ENCODE measurements at regions of chr15 and their contacts with region 1.

Region 1: DNA sequence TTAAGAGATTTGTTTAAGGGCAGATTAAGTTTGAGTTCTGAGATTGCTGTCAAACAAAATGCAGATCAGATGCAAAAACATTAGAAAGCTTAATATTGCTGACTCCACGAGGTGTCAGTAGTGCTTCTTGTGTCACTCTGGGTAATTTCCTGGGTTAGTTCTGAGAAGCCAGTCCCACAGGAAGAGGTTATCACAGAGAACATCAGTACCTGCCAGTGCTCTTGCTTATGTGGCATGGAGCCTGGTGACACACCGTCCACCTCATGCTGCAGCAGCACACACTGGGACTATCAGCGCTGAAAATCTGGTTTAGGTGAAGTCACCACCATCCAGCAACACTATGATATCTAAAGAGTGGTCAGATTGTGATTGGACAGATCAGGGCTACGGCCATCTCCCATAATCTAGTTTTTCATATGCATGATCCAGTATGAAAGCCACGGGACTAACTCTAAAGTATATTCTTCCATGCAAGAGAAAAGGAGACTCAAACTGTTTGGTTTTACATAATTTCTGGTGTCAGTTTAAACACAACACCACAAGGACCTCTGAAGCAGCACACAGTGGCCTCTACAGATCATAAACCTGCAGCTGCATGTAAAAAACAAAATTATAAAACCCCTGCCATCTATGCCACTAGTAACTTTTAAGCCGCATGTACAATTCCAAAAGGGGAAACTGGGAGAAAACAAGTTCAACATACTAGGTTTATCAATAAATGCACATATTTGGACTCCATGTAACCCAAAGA is 36.1 kb upstream of the MYO5C start:
- DNase-seq: peak; percentile 76
- H3K4me3 Mint-ChIP-seq: no peak overlapping the region
- H3K27ac Mint-ChIP-seq: peak overlapping the region; percentile 7
- H3K4me1 Mint-ChIP-seq: peaks cover 11% of the 10 kb centered on the region
- H3K27me3 Mint-ChIP-seq: no peaks in the 10 kb centered on the region

Region 2: GRCh38 chr15:51505251-51505650 is 826.4 kb before region 1 on chr15:
- CTCF ChIA-PET with region 1: no interaction called
- intact Hi-C with region 1: no loop called
- DNase-seq: no peak
- H3K4me3 Mint-ChIP-seq: no peak overlapping the region
- H3K27ac Mint-ChIP-seq: no peak overlapping the region
- H3K4me1 Mint-ChIP-seq: no peaks in the 10 kb centered on the region
- H3K27me3 Mint-ChIP-seq: no peaks in the 10 kb centered on the region

Region 3: DNA sequence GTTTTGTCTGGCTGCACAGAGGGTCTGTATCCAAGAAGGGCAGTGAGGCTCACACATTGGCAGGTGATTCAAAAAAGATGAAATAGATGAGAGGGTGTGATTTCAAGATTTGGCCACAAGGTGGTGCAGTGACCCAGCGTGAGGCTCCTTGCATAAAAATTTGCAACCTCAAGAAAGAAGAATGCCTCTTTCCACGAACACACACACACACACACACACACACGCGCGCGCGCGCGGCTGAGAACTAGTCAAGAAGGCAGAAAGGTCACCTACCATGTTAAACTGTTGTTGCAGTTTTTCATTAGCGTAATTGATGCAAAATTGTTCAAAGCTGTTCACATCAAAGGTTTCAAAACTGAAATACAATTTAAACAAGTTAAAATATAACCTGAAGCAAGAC is 75.3 kb before region 1 on chr15:
- CTCF ChIA-PET with region 1: interaction called, 10 read pairs
- intact Hi-C with region 1: loop called (anchors 1 kb)
- DNase-seq: peak; percentile 87
- H3K4me3 Mint-ChIP-seq: peak overlapping the region; percentile 52
- H3K27ac Mint-ChIP-seq: no peak overlapping the region
- H3K4me1 Mint-ChIP-seq: peaks cover 18% of the 10 kb centered on the region
- H3K27me3 Mint-ChIP-seq: no peaks in the 10 kb centered on the region

Region 4: DNA sequence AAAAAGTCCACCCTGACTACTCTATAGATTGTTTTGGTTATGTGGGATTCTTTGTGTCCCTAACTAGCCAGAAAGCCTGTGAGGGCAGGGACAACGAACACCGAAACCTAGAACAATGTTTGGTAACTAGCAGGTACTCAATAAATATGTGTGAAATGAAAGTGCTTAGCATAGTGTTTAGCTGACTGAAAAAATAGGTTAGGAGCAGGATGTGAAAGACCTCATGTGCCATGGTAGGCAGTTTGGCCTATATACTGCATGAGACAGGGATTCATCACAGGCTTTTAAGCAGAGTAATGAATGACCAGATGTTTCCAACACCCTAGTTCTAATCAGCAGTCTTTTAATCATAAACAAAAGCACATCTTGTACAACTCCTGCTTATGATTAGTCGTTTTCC is 132.8 kb after region 1 on chr15:
- CTCF ChIA-PET with region 1: interaction called, 3 read pairs
- intact Hi-C with region 1: loop called (anchors 1 kb)
- DNase-seq: peak; percentile 20
- H3K4me3 Mint-ChIP-seq: no peak overlapping the region
- H3K27ac Mint-ChIP-seq: peak overlapping the region; percentile 43
- H3K4me1 Mint-ChIP-seq: peaks cover 31% of the 10 kb centered on the region
- H3K27me3 Mint-ChIP-seq: no peaks in the 10 kb centered on the region

Region 5: GRCh38 chr15:52568601-52569256 is 237.1 kb after region 1 on chr15 and contains the start of gene ARPP19:
- CTCF ChIA-PET with region 1: interaction called, 4 read pairs
- intact Hi-C with region 1: loop called (anchors 1 kb)
- DNase-seq: peak; percentile 90
- H3K4me3 Mint-ChIP-seq: peak within 1 kb of the TSS; percentile 86
- H3K27ac Mint-ChIP-seq: peak within 1 kb of the TSS; percentile 98
- H3K4me1 Mint-ChIP-seq: peaks cover 23% of the 10 kb centered on the region
- H3K27me3 Mint-ChIP-seq: no peaks in the 10 kb centered on the region
- total RNA-seq, gene ARPP19: 130 to 144 TPM

Region 6: DNA sequence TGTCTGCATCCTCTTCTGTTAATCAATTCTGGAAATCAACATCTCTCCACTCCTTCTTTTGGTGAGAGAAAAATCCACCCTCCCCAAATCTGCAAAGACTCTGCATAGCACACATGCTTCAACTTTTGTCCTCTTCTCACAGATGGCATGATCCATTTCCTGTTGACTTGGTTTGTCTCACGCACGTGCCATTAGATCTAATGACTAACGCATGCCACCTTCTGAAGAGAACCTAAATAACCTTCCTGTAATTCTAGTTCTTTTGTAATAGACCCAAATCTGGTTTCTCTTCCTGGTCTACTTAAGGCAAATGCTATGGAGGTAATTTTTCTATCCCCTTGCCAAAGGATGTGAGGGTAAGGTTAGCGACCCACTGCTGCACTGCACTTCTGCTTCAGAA is 398.5 kb after region 1 on chr15:
- CTCF ChIA-PET with region 1: interaction called, 13 read pairs
- intact Hi-C with region 1: loop called (anchors 1 kb)
- DNase-seq: peak; percentile 73
- H3K4me3 Mint-ChIP-seq: no peak overlapping the region
- H3K27ac Mint-ChIP-seq: peak overlapping the region; percentile 57
- H3K4me1 Mint-ChIP-seq: peaks cover 38% of the 10 kb centered on the region
- H3K27me3 Mint-ChIP-seq: no peaks in the 10 kb centered on the region

Region 7: GRCh38 chr15:53197426-53197839 is 865.8 kb after region 1 on chr15:
- CTCF ChIA-PET with region 1: no interaction called
- intact Hi-C with region 1: loop called (anchors 5 kb)
- DNase-seq: peak; percentile 59
- H3K4me3 Mint-ChIP-seq: no peak overlapping the region
- H3K27ac Mint-ChIP-seq: no peak overlapping the region
- H3K4me1 Mint-ChIP-seq: no peaks in the 10 kb centered on the region
- H3K27me3 Mint-ChIP-seq: peaks cover 29% of the 10 kb centered on the region